ENCODE measurements at regions of chr19 and their contacts with region 1.

Region 1: GRCh38 chr19:55586976-55587668 is 6.5 kb upstream of the ZNF579 start:
- DNase-seq: peak; percentile 96 to 100
- H3K4me3 ChIP-seq: peak overlapping the region; percentile 57
- H3K27ac ChIP-seq: peak overlapping the region; percentile 11; the same call in 1 of the 2 replicates
- H3K4me1 ChIP-seq: peaks cover 10% of the 10 kb centered on the region
- H3K27me3 ChIP-seq: 0 out of 2 replicates have a peak, but pooled peaks cover 5% of the 10 kb centered on the region
- CTCF ChIP-seq: no peak

Region 2: DNA sequence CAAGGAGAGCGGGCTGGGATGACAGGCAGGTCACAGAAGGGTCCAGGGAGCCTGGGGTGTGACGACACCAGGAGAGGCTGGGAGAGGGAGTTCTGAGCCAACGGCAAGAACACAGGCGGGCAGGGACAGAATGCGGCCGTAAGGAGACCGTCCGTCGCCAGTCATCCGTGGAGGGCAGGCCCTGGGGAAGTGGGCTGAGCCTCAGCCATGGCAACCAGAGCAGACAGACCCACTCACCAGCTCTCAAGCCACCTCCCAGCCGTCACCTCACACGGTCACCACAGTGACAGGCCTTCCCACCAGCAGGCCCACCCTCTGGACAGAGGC is 354.9 kb before region 1 on chr19:
- CTCF ChIA-PET with region 1: interaction called, 18 read pairs
- POLR2A ChIA-PET with region 1: no interaction called
- intact Hi-C with region 1: no loop called
- DNase-seq: no peak
- H3K4me3 ChIP-seq: no peak overlapping the region
- H3K27ac ChIP-seq: no peak overlapping the region
- H3K4me1 ChIP-seq: no peaks in the 10 kb centered on the region
- H3K27me3 ChIP-seq: no peaks in the 10 kb centered on the region
- CTCF ChIP-seq: no peak

Region 3: DNA sequence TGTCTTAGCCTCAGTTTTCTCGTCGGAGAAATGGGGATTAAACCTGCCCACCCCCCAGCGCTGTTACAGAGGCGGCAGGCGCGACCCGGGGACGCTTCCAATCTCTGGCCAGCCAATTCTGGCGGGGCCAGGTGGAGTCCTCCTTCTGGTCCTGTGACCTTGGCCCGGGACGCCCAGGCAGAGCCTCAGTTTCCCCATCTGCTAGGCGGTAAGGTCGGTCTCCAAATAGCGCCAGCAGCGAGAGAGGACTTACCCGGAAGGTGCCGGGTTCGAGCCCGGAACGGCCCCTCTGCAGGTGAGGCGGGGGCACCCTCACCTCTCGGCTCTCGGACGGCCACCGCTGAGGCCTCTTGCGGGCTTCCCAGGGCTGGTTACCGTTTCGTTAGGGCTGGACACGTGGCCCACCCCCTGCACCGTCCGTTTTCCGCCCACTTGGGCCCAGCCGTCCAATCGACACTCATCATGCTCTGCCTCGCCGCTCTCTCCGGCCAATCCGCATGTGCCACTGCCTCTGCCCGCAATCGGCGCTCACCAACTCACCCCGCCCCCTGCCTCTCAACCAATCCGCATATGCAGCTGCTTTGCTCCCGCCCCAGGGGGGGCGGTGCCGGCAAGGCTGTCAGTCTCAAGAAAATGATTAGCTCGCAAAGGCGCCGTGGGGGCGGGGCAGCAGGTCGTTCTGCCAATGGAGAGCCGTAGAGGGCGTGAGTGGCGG is 125.7 kb before region 1 on chr19 and contains the start of gene ISOC2:
- CTCF ChIA-PET with region 1: no interaction called
- POLR2A ChIA-PET with region 1: interaction called, 21 read pairs
- intact Hi-C with region 1: no loop called
- DNase-seq: peak; percentile 99 to 100
- H3K4me3 ChIP-seq: peak within 1 kb of the TSS; percentile 90
- H3K27ac ChIP-seq: peak within 1 kb of the TSS; percentile 68
- H3K4me1 ChIP-seq: peaks cover 12% of the 10 kb centered on the region
- H3K27me3 ChIP-seq: no peaks in the 10 kb centered on the region
- CTCF ChIP-seq: no peak
- total RNA-seq, gene ISOC2: 92.4 and 113 TPM in 2 replicates

Region 4: GRCh38 chr19:55516878-55517620 is 70.1 kb before region 1 on chr19:
- CTCF ChIA-PET with region 1: interaction called, 3 read pairs
- POLR2A ChIA-PET with region 1: interaction called, 3 read pairs
- intact Hi-C with region 1: loop called (anchors 1 kb)
- DNase-seq: peak; percentile 83 to 97
- H3K4me3 ChIP-seq: peak overlapping the region; percentile 60; the same call in 1 of the 2 replicates
- H3K27ac ChIP-seq: no peak overlapping the region
- H3K4me1 ChIP-seq: no peaks in the 10 kb centered on the region
- H3K27me3 ChIP-seq: peaks cover 17% of the 10 kb centered on the region
- CTCF ChIP-seq: peak; percentile 94

Region 5: DNA sequence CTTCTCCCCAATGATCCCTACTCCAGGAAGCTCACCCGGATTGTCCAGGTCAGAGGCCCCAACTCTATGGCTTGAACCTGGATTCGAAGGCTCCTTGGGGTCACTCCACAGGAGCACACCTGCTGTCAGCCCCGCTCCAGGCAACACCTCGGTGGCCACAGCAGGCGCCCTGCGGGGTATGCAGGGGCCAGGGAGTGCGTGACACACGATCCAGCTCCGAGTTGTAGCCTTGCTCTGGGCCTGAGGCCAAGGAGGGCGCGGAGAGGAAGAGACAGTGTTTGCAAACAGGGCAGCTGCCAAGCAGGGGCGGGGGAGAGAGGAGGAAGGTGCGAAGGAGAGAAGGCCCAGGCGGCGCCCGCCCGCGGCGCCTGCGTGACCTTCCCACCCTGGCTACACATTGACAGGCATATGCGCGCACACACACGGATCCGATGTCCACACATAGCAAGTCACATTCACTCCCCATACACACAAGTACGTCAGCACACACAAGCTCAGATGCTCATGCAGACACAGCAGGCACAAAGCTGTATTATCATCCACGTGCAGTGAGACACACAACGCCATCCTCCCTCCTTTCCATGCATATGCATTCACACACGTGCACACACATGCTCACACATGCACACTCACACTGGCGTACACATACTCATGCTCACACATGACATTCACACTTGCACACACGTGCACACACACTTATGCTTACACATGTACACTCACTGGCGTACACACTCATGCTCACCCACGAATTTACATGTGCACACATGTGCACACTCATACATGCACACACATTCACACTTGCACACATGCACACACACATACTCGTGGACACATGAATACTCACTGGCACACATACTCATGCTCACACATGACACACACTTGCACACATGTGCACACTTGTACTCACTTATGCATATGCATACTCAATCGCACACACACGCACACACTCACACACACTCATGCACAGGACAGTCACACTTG is 60.6 kb before region 1 on chr19:
- CTCF ChIA-PET with region 1: no interaction called
- POLR2A ChIA-PET with region 1: no interaction called
- intact Hi-C with region 1: loop called (anchors 2 kb)
- DNase-seq: peak; percentile 84 to 87
- H3K4me3 ChIP-seq: no peak overlapping the region
- H3K27ac ChIP-seq: no peak overlapping the region
- H3K4me1 ChIP-seq: peaks cover 12% of the 10 kb centered on the region
- H3K27me3 ChIP-seq: no peaks in the 10 kb centered on the region
- CTCF ChIP-seq: no peak

Region 6: GRCh38 chr19:55599468-55600279 is 12.6 kb after region 1 on chr19 and contains the start of gene FIZ1:
- CTCF ChIA-PET with region 1: no interaction called
- POLR2A ChIA-PET with region 1: interaction called, 42 read pairs
- intact Hi-C with region 1: loop called (anchors 1 kb)
- DNase-seq: peak; percentile 93 to 98
- H3K4me3 ChIP-seq: peak within 1 kb of the TSS; percentile 91
- H3K27ac ChIP-seq: peak within 1 kb of the TSS; percentile 94
- H3K4me1 ChIP-seq: peaks cover 22% of the 10 kb centered on the region
- H3K27me3 ChIP-seq: no peaks in the 10 kb centered on the region
- CTCF ChIP-seq: 0 out of 2 replicates have a peak, but pooled peaks have one; percentile 16
- total RNA-seq, gene FIZ1: 25.2 and 25.4 TPM in 2 replicates

Region 7: GRCh38 chr19:55605207-55605636 is 18.1 kb after region 1 on chr19:
- CTCF ChIA-PET with region 1: interaction called, 3 read pairs
- POLR2A ChIA-PET with region 1: no interaction called
- intact Hi-C with region 1: loop called (anchors 1 kb)
- DNase-seq: peak; percentile 93 to 100
- H3K4me3 ChIP-seq: peak overlapping the region; percentile 79
- H3K27ac ChIP-seq: peak overlapping the region; percentile 66
- H3K4me1 ChIP-seq: peaks cover 29% of the 10 kb centered on the region
- H3K27me3 ChIP-seq: no peaks in the 10 kb centered on the region
- CTCF ChIP-seq: no peak

Region 8: DNA sequence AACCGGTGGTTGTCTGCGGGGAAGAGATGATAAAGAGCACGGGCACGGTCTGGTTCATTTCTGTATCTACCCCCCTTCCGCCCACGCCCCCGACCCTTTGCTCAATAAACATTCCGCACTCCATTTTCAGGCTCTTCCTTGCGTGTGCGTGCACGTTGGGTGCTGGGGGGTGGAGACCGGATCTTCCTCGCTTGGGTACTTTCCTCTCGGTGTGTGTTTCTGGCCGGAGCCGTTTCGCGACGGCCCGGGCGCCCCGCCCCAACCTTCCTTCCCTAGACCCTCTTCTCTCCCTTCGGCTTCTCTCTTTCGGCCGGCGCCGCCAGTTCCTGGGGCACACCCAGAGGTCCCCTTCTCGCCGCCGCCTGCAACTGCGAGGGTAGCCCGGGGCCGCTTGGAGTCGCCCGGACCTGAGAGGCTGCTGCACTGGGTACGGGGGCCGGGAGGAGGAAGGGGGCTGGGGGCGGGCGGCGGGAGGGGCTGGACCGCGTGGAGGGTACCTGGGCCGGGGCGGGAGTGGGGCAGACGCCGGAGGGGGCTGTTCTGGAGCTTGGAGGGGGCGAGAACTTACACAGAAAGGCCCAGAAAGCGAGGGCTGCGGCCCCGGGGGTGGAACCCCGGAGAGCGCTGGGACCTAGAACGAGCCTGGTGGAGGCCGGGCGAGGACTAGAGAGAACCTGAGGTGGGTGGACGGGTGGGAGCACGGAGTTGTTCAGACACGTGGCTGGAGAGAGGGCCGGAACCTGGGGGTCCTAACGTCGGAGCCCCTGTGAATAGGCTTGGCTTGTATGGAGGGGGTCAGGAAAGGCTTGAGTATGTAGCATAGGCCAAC is 56.4 kb after region 1 on chr19 and contains the start of gene ZNF581:
- CTCF ChIA-PET with region 1: no interaction called
- POLR2A ChIA-PET with region 1: no interaction called
- intact Hi-C with region 1: no loop called
- DNase-seq: peak; percentile 66 to 79
- H3K4me3 ChIP-seq: peak within 1 kb of the TSS; percentile 66
- H3K27ac ChIP-seq: peak within 1 kb of the TSS; percentile 44
- H3K4me1 ChIP-seq: peaks cover 8% of the 10 kb centered on the region
- H3K27me3 ChIP-seq: no peaks in the 10 kb centered on the region
- CTCF ChIP-seq: no peak
- total RNA-seq, gene ZNF581: 53.5 and 81.9 TPM in 2 replicates

Region 9: GRCh38 chr19:55753401-55753800 is 166.3 kb after region 1 on chr19:
- CTCF ChIA-PET with region 1: no interaction called
- POLR2A ChIA-PET with region 1: no interaction called
- intact Hi-C with region 1: no loop called
- DNase-seq: no peak
- H3K4me3 ChIP-seq: no peak overlapping the region
- H3K27ac ChIP-seq: no peak overlapping the region
- H3K4me1 ChIP-seq: no peaks in the 10 kb centered on the region
- H3K27me3 ChIP-seq: peaks cover 100% of the 10 kb centered on the region
- CTCF ChIP-seq: no peak